ENCODE measurements at regions of chr19 and their contacts with region 1.

Region 1: DNA sequence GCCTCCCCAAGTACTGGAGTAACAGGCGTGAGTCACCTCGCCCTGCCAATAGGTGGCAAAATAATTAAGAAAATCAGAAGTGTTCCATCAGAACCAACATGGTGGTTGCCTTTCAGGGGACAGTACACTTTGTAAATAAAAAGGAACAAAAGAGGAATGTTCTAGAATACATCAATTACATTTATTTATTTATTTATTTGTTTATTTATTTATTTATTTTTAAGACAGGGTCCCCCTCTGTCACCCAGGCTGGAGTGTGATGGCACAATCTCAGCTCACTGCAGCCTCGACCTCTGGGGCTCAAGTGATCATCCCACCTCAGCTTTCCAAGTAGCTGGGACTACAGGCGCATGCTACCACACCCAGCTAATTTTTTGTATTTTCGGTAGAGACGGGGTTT is 12.9 kb upstream of the TYROBP start:
- DNase-seq: no peak
- H3K4me3 ChIP-seq: no peak overlapping the region
- H3K27ac ChIP-seq: no peak overlapping the region
- H3K4me1 ChIP-seq: no peaks in the 10 kb centered on the region
- H3K27me3 ChIP-seq: no peaks in the 10 kb centered on the region

Region 2: GRCh38 chr19:35882114-35882832 is 38.7 kb before region 1 on chr19:
- CTCF ChIA-PET with region 1: interaction called, 20 read pairs
- POLR2A ChIA-PET with region 1: no interaction called
- DNase-seq: peak; percentile 77 to 92 (median 88)
- H3K4me3 ChIP-seq: no peak overlapping the region
- H3K27ac ChIP-seq: no peak overlapping the region
- H3K4me1 ChIP-seq: peaks cover 0 to 3% (median 1%) of the 10 kb centered on the region in 4 experiments
- H3K27me3 ChIP-seq: peaks cover 0 to 22% (median 8%) of the 10 kb centered on the region in 5 experiments

Region 3: GRCh38 chr19:35899547-35900214 is 21.3 kb before region 1 on chr19:
- CTCF ChIA-PET with region 1: interaction called, 11 read pairs
- POLR2A ChIA-PET with region 1: interaction called, 5 read pairs
- DNase-seq: peak; percentile 80 to 92 (median 91)
- H3K4me3 ChIP-seq: peak overlapping the region; percentile 72 to 90 (median 84)
- H3K27ac ChIP-seq: peak overlapping the region; percentile 91 to 94
- H3K4me1 ChIP-seq: peaks cover 12 to 59% (median 55%) of the 10 kb centered on the region in 4 experiments
- H3K27me3 ChIP-seq: no peaks in the 10 kb centered on the region

Region 4: DNA sequence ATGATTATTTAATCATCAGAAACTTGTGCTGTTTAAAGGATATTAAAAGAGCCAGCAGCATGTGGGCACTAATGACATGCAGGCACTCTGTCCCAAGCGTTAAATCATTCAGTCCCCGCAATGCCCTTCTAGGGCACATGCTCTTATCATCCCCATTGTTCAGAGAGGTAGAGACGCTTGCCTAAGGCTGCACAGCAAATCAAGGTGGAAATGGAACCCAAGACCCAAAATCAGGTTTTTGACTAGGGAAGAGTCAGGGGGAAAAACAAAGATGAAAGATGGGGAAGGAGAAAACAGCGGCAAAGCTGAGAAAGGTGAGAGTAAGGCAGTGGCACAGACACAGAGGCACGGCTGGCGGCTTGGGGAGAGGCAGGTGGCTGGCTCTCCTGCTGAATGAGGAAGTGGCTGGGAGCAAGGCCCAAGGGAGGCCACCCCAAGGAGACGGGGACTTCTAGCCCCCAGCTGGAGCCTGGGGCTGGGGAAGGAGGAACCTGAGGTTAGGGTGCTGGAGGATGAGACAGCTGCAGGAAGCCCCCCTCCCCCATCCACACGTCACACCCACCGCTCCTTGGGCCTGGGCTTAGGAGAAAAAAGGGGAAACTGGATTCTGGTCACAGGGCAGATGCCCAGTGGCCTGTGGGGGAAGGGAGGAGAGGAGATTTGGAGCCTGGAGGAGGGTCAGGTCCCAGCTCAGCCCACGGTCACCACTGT is 11.9 kb before region 1 on chr19:
- CTCF ChIA-PET with region 1: interaction called, 11 read pairs
- POLR2A ChIA-PET with region 1: interaction called, 6 read pairs
- DNase-seq: peak; percentile 97 to 99 (median 99)
- H3K4me3 ChIP-seq: peak overlapping the region in 5 of 7 experiments; percentile 22 to 68 (median 44)
- H3K27ac ChIP-seq: peak overlapping the region; percentile 85 to 90
- H3K4me1 ChIP-seq: peaks cover 11 to 80% (median 55%) of the 10 kb centered on the region in 4 experiments
- H3K27me3 ChIP-seq: no peaks in the 10 kb centered on the region

Region 5: DNA sequence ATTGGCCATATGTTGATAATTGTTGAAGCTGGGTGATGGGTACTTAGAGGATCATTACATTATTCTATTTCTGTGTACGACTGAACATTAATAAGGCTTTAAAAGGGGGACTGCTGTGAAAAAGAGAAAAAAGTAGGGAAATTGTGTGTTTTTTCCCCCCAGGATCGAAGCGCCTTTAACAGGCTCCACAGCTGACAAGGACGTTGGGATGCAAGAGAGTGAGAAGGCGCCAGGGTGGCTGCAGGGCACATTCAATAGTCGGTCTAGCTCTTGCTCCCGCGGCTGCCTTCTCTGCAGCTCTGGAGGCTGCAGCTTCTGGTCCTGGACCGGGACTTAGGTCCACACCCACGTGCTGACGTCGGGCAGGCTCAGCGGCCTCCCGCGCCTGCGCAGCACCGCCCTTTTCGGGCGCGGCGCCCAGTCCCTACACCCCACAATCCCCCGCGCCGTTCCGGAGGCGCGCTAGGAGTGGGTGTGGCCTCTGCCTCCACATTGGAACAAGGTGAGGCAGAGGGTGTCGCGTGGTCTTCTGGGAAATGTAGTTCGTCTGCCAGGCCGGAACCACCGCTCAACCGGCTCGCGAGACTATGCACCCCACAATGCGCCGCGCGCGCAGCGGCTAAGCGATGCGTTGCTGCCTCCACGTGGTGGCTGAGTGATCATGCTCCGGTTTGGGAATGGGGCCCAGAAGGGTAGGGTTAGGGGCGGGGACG is 10.3 kb after region 1 on chr19:
- CTCF ChIA-PET with region 1: interaction called, 11 read pairs
- POLR2A ChIA-PET with region 1: no interaction called
- DNase-seq: peak; percentile 99 to 100 (median 99)
- H3K4me3 ChIP-seq: peak overlapping the region in 6 of 7 experiments; percentile 32 to 74 (median 57)
- H3K27ac ChIP-seq: no peak overlapping the region
- H3K4me1 ChIP-seq: peaks cover 16 to 31% (median 27%) of the 10 kb centered on the region in 4 experiments
- H3K27me3 ChIP-seq: peaks cover 0 to 2% (median 0%) of the 10 kb centered on the region in 5 experiments

Measured in common myeloid progenitor, CD34-positive (primary cell).